GM10248 (cell line): ENCODE measurements at regions of chr7 and their contacts with region 1.

Region 1: GRCh38 chr7:55255496-55256435 is 109.4 kb upstream of the LANCL2 start:
- DNase-seq: peak; percentile 85
- CTCF ChIP-seq: peak; percentile 91

Region 2: DNA sequence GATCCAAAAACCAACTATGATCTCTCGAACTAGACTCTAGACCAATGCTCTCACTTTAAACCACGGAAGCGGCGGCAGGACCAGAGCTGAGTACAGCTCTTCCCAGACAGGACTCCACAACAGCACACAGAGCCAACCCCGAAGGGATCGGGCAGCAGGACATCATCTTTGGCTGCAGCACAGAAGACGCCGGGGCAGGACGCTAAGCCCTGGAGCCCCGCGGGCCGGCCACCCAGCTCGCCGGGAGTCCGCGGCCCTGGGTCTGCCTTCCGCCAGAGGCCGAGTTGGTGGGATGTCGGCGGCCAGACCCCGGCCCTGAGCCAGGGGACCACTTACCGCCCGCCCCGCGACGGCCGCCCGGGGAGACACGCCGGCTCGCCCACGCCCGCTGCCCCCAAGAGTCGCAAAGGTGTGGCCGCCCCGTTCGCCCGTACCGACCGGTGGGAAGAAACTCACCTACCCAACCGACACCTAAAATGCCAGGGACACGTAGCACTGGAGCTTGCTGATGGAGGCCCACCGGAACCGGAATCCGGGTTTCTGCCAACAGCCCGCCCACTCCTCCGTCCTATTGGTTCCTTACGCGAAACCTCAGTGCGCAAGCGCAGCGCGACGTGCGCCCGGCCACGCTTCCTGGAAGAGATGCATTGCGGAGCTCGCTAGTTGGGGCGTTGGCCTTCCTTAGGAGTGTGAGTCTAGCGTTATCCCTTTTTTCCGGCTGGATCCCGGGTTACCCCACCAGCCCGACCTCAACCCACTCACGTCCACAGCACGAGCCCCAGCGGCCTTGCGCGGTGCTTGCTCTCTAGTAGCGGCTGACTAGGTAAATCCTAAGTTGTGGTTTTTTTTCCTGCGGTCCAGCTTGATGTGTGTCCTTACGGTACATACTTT is 496.8 kb before region 1 on chr7 and contains the start of gene SEC61G:
- CTCF ChIA-PET with region 1: interaction called, 49 read pairs
- POLR2A ChIA-PET with region 1: no interaction called
- DNase-seq: peak; percentile 95
- CTCF ChIP-seq: no peak

Region 3: GRCh38 chr7:54798569-54798968 is 457.2 kb before region 1 on chr7:
- CTCF ChIA-PET with region 1: interaction called, 15 read pairs
- POLR2A ChIA-PET with region 1: no interaction called
- DNase-seq: no peak
- CTCF ChIP-seq: no peak

Region 4: GRCh38 chr7:55065079-55065478 is 190.7 kb before region 1 on chr7:
- CTCF ChIA-PET with region 1: interaction called, 17 read pairs
- POLR2A ChIA-PET with region 1: no interaction called
- DNase-seq: no peak
- CTCF ChIP-seq: no peak

Region 5: GRCh38 chr7:55212838-55213539 is 42.8 kb before region 1 on chr7:
- CTCF ChIA-PET with region 1: interaction called, 11 read pairs
- POLR2A ChIA-PET with region 1: no interaction called
- DNase-seq: no peak
- CTCF ChIP-seq: no peak

Region 6: GRCh38 chr7:55245271-55245723 is 10.5 kb before region 1 on chr7:
- CTCF ChIA-PET with region 1: interaction called, 30 read pairs
- POLR2A ChIA-PET with region 1: no interaction called
- DNase-seq: no peak
- CTCF ChIP-seq: no peak

Region 7: DNA sequence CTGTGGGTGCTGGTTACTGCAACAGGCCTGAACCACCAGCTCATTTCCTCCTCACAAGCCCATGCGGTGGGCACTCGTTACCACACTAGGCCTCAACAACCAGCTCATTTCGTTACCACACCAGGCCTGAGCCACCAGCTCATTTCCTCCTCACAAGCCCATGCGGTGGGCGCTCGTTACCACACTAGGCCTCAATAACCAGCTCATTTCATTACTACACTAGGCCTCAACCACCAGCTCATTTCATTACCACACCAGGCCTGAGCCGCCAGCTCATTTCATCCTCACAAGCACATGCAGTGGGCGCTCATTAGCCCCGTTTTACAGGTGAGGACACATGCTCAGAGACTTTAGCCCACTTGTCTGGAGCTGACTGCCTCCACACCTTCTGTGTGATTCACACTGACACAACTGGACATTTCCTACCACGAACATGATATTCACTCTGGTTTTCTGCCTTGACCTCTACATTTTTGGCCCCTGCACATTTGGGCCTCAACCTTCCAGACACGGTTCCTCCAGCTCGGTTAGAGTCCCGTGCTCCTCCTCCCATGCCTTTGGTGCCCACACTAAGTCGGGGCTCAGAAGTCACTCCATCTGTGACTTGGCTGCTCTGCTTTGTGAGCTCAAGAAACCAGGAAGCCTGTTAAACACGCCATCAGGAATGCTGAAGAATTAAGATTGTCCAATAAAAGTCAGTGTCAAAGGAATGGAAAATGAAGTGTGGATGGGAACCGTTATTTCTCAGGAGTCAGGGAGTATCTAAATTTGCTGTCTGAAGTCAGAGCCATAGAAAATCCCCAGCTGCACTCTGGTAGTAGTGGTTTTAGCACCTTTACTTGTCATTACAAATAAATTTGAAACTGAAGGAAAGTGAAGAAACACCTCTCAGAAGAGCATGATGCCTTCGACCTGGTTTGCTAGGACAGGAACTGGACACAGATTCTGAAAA is 53.5 kb after region 1 on chr7:
- CTCF ChIA-PET with region 1: interaction called, 12 read pairs
- POLR2A ChIA-PET with region 1: no interaction called
- DNase-seq: peak; percentile 70
- CTCF ChIP-seq: no peak